CD4-positive, alpha-beta T cell (primary cell): ENCODE measurements at regions of chr6 and their contacts with region 1.

Region 1: DNA sequence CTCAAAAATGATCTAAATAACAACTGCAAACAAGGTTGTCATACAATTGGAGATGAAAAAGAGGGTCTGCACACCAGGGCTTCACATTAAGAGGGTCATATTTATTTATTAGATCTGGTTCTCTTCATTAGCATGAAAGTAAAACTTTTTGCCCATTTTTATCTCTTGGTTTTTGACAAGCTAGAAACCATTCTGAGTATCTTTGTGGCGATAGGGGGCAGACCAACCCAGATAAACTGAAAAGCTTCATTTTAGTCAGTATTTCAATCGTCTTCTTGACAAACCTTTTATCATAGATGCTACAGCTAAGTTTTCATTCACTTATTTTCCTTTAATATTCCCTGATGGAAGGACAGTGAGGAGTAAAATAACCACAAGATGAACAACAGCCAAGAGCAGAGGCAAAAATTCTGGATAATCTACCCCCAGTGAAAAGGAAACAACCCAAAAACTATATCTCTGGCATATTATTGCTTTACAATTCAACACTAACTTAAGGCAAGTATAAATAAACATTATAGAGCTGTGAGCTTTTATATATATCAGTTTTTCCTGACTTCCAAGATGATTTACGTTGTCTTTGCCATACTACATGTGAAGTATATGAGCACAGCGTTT is 45.2 kb downstream of the THEMIS start:
- DNase-seq: peak in 13 of 14 experiments; percentile 16 to 75 (median 47)
- ATAC-seq: peak; percentile 73
- H3K4me3 ChIP-seq: no peak overlapping the region
- H3K4me3 Mint-ChIP-seq: peak overlapping the region; percentile 31
- H3K27ac ChIP-seq: no peak overlapping the region
- H3K27ac Mint-ChIP-seq: peak overlapping the region; percentile 69
- H3K4me1 ChIP-seq: peaks cover 6% of the 10 kb centered on the region
- H3K4me1 Mint-ChIP-seq: peaks cover 86% of the 10 kb centered on the region
- H3K27me3 ChIP-seq: no peaks in the 10 kb centered on the region
- H3K27me3 Mint-ChIP-seq: no peaks in the 10 kb centered on the region
- CTCF ChIP-seq: peak; percentile 74

Region 2: DNA sequence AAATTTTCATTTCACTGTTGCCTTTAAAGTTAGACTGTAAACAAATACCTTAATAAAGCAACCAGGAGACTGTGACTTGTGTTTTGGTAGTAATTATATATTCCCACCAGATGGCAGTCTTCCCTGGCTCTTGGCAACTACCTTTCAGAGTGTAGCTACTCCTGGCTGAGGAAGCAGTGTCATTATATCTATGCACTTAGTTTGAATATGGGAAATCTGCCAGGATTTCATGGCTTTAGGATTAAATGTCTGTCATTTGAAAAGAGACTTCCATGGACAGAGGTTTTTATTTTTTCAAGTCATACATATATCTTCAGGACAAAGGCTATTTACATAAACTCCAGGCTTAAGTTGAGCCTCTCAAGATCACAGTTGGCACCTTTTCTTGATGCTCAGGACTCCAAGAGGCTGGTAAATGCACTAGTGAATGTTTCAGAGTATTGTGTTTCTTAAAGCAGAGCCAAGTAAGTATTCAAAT is 118.6 kb before region 1 on chr6:
- CTCF ChIA-PET with region 1: interaction called, 8 read pairs
- POLR2A ChIA-PET with region 1: interaction called, 5 read pairs
- intact Hi-C with region 1: loop called (anchors 2 to 5 kb)
- DNase-seq: peak in 10 of 14 experiments; percentile 3 to 82 (median 24)
- ATAC-seq: peak; percentile 95
- H3K4me3 ChIP-seq: no peak overlapping the region
- H3K4me3 Mint-ChIP-seq: no peak overlapping the region
- H3K27ac ChIP-seq: no peak overlapping the region
- H3K27ac Mint-ChIP-seq: peak overlapping the region; percentile 56
- H3K4me1 ChIP-seq: no peaks in the 10 kb centered on the region
- H3K4me1 Mint-ChIP-seq: peaks cover 62% of the 10 kb centered on the region
- H3K27me3 ChIP-seq: no peaks in the 10 kb centered on the region
- H3K27me3 Mint-ChIP-seq: no peaks in the 10 kb centered on the region
- CTCF ChIP-seq: peak; percentile 85

Region 3: GRCh38 chr6:127918506-127919427 is 63.1 kb after region 1 on chr6:
- CTCF ChIA-PET with region 1: interaction called, 14 read pairs
- POLR2A ChIA-PET with region 1: interaction called, 7 read pairs
- intact Hi-C with region 1: loop called (anchors 1 to 5 kb)
- DNase-seq: peak in 5 of 14 experiments; percentile 22 to 83 (median 72)
- ATAC-seq: peak; percentile 83
- H3K4me3 ChIP-seq: peak overlapping the region; percentile 64
- H3K4me3 Mint-ChIP-seq: peak overlapping the region; percentile 90
- H3K27ac ChIP-seq: peak overlapping the region; percentile 40 to 49
- H3K27ac Mint-ChIP-seq: peak overlapping the region; percentile 98
- H3K4me1 ChIP-seq: peaks cover 51% of the 10 kb centered on the region
- H3K4me1 Mint-ChIP-seq: peaks cover 89% of the 10 kb centered on the region
- H3K27me3 ChIP-seq: no peaks in the 10 kb centered on the region
- H3K27me3 Mint-ChIP-seq: no peaks in the 10 kb centered on the region
- CTCF ChIP-seq: no peak

Region 4: GRCh38 chr6:127971945-127972391 is 116.3 kb after region 1 on chr6:
- CTCF ChIA-PET with region 1: interaction called, 6 read pairs
- POLR2A ChIA-PET with region 1: interaction called, 5 read pairs
- intact Hi-C with region 1: loop called in 1 of 2 experiments (anchors 2 kb)
- DNase-seq: peak; percentile 22 to 91 (median 42)
- ATAC-seq: peak; percentile 88
- H3K4me3 ChIP-seq: peak overlapping the region; percentile 53
- H3K4me3 Mint-ChIP-seq: peak overlapping the region; percentile 90
- H3K27ac ChIP-seq: peak overlapping the region; percentile 67 to 84
- H3K27ac Mint-ChIP-seq: peak overlapping the region; percentile 97
- H3K4me1 ChIP-seq: peaks cover 17% of the 10 kb centered on the region
- H3K4me1 Mint-ChIP-seq: peaks cover 75% of the 10 kb centered on the region
- H3K27me3 ChIP-seq: no peaks in the 10 kb centered on the region
- H3K27me3 Mint-ChIP-seq: no peaks in the 10 kb centered on the region
- CTCF ChIP-seq: no peak

Region 5: GRCh38 chr6:128327890-128328289 is 472.2 kb after region 1 on chr6:
- CTCF ChIA-PET with region 1: interaction called, 22 read pairs
- POLR2A ChIA-PET with region 1: interaction called, 8 read pairs
- intact Hi-C with region 1: loop called (anchors 1 to 2 kb)
- DNase-seq: peak in 9 of 14 experiments; percentile 1 to 71 (median 5)
- ATAC-seq: peak; percentile 59
- H3K4me3 ChIP-seq: no peak overlapping the region
- H3K4me3 Mint-ChIP-seq: no peak overlapping the region
- H3K27ac ChIP-seq: no peak overlapping the region
- H3K27ac Mint-ChIP-seq: no peak overlapping the region
- H3K4me1 ChIP-seq: peaks cover 3% of the 10 kb centered on the region
- H3K4me1 Mint-ChIP-seq: no peaks in the 10 kb centered on the region
- H3K27me3 ChIP-seq: no peaks in the 10 kb centered on the region
- H3K27me3 Mint-ChIP-seq: no peaks in the 10 kb centered on the region
- CTCF ChIP-seq: peak; percentile 61

Region 6: GRCh38 chr6:128725271-128726233 is 869.9 kb after region 1 on chr6:
- CTCF ChIA-PET with region 1: interaction called, 3 read pairs
- POLR2A ChIA-PET with region 1: no interaction called
- intact Hi-C with region 1: loop called (anchors 2 to 5 kb)
- DNase-seq: peak in 5 of 14 experiments; percentile 1 to 33 (median 26)
- ATAC-seq: no peak
- H3K4me3 ChIP-seq: no peak overlapping the region
- H3K4me3 Mint-ChIP-seq: no peak overlapping the region
- H3K27ac ChIP-seq: no peak overlapping the region
- H3K27ac Mint-ChIP-seq: no peak overlapping the region
- H3K4me1 ChIP-seq: no peaks in the 10 kb centered on the region
- H3K4me1 Mint-ChIP-seq: no peaks in the 10 kb centered on the region
- H3K27me3 ChIP-seq: peaks cover 0 to 11% of the 10 kb centered on the region in 2 experiments
- H3K27me3 Mint-ChIP-seq: peaks cover 37% of the 10 kb centered on the region
- CTCF ChIP-seq: peak; percentile 63